Endothelial cell of umbilical vein (primary cell): ENCODE measurements at regions of chr3 and their contacts with region 1.

Region 1: DNA sequence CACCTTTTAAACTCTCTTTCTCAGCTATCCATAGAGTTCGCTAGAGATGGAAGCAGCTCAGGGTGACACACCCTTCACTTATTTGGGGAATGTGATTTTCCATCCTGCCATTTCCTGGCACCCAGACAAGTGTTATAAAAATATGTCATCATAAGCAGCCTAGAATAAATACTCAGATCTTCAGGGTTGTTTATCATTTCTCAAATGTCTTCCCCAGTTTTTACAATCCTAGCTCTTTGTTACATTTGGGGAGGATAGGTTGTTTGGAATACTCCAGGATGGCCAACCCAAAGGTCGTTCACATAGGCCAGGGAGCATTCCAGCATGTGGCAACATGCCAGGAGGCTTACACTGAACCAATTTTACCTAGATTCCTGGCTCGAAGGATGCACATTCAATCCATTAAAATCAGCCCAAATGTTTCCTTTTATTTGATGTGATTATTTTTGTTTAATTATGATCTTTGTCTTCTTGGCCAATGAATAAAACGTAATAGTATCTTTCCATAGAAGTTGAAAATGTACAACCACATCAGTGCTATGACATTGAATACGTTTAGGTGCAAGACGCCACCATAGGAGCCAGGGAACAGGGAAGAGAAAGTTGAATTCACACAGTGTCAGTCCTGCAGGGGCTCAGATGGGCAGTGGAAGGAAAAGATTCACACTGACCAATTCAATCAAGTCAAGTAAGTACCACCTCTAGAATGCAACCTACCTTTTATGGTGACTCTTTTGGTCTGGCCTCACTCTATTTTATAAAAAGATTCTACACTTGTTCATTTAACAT is 537.7 kb upstream of the MDFIC2 start:
- DNase-seq: peak; percentile 94
- H3K4me3 ChIP-seq: no peak overlapping the region
- H3K27ac ChIP-seq: peak overlapping the region; percentile 88
- H3K4me1 ChIP-seq: peaks cover 38% of the 10 kb centered on the region
- H3K27me3 ChIP-seq: no peaks in the 10 kb centered on the region
- CTCF ChIP-seq: no peak
- POLR2A ChIP-seq: no peak

Region 2: GRCh38 chr3:70737678-70738306 is 112.3 kb before region 1 on chr3:
- CTCF ChIA-PET with region 1: no interaction called
- POLR2A ChIA-PET with region 1: no interaction called
- dilution Hi-C with region 1: no loop called
- intact Hi-C with region 1: loop called (anchors 2 kb)
- DNase-seq: peak; percentile 97
- H3K4me3 ChIP-seq: no peak overlapping the region
- H3K27ac ChIP-seq: peak overlapping the region; percentile 84
- H3K4me1 ChIP-seq: peaks cover 13% of the 10 kb centered on the region
- H3K27me3 ChIP-seq: no peaks in the 10 kb centered on the region
- CTCF ChIP-seq: no peak
- POLR2A ChIP-seq: no peak

Region 3: DNA sequence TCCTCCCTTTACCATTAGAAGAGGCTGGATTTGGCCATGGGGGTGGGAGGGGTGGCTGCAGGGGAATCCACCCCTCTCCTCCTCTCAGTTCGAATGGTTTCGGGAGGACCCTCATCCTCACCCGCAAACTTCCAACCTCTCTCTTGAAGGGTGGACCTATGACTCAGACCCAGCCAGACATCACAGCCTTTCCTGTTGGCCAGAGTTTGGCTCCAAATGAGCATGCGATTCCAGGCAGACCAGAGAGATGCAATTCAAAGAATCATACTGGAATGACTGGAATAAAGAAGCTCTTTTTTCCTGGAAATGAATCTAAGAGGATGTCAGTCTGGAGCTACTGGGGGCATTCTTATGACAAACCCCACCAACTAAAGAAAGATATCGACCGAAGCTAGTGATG is 21.0 kb before region 1 on chr3:
- CTCF ChIA-PET with region 1: no interaction called
- POLR2A ChIA-PET with region 1: interaction called, 6 read pairs
- dilution Hi-C with region 1: no loop called
- intact Hi-C with region 1: loop called (anchors 1 kb)
- DNase-seq: peak; percentile 89
- H3K4me3 ChIP-seq: no peak overlapping the region
- H3K27ac ChIP-seq: peak overlapping the region; percentile 47
- H3K4me1 ChIP-seq: peaks cover 18% of the 10 kb centered on the region
- H3K27me3 ChIP-seq: no peaks in the 10 kb centered on the region
- CTCF ChIP-seq: no peak
- POLR2A ChIP-seq: no peak

Region 4: GRCh38 chr3:70982700-70983140 is 132.6 kb after region 1 on chr3:
- CTCF ChIA-PET with region 1: no interaction called
- POLR2A ChIA-PET with region 1: no interaction called
- dilution Hi-C with region 1: no loop called
- intact Hi-C with region 1: loop called (anchors 1 kb)
- DNase-seq: peak; percentile 97
- H3K4me3 ChIP-seq: no peak overlapping the region
- H3K27ac ChIP-seq: peak overlapping the region; percentile 92
- H3K4me1 ChIP-seq: peaks cover 46% of the 10 kb centered on the region
- H3K27me3 ChIP-seq: no peaks in the 10 kb centered on the region
- CTCF ChIP-seq: no peak
- POLR2A ChIP-seq: peak; percentile 56